ENCODE measurements at regions of chr14 and their contacts with region 1.

Region 1: GRCh38 chr14:74601983-74602382 is 10.1 kb downstream of the LTBP2 start:
- DNase-seq: no peak
- H3K4me3 ChIP-seq: no peak overlapping the region
- H3K27ac ChIP-seq: no peak overlapping the region
- H3K4me1 ChIP-seq: no peaks in the 10 kb centered on the region
- H3K27me3 ChIP-seq: no peaks in the 10 kb centered on the region
- CTCF ChIP-seq: no peak

Region 2: GRCh38 chr14:74469548-74470518 is 132.2 kb before region 1 on chr14:
- CTCF ChIA-PET with region 1: no interaction called
- POLR2A ChIA-PET with region 1: interaction called, 11 read pairs
- intact Hi-C with region 1: no loop called
- DNase-seq: no peak
- H3K4me3 ChIP-seq: no peak overlapping the region
- H3K27ac ChIP-seq: no peak overlapping the region
- H3K4me1 ChIP-seq: no peaks in the 10 kb centered on the region
- H3K27me3 ChIP-seq: no peaks in the 10 kb centered on the region
- CTCF ChIP-seq: no peak

Region 3: DNA sequence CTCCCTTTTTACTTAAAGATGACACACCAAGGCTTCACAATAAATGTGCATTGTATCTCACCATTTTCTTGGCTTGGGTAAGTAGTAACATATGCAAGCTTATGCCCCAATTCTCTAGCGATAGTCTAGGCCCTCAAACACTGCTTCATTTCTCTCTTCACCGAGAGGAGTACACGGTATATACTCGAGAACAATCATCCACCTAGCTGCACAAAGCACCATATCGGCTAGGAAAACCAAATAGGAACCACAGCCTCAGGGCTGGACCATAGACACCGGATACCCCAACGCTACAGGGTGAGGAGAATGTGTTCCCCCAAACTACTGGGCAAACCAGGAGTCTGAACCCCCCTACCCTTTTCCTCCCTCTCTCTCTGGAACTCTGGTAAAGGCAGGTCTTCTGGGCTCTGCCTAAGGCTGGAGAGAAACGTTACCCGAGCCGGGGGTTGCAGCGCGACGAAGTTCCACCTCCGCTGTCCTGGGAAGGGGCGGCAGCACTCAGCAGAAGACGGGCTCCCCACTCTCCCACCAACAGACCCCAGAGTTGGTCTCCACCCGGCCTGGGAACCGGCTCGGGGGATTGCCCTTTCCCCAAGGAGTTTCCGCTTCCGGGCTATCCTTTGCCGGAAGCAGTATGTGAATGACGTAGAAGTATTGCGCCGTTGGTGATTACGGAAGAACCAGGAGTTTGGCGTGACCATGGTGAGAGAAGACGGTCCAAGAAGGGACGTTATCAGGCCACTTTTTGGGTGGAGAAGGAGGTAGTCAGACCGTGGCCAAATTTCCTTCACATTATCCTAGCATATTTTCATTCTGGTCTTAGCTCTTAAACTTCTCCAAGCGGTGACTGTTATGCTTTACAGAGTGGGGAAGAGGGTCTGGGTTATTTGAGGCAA is 110.8 kb after region 1 on chr14 and contains the starts of genes AREL1 and FCF1:
- CTCF ChIA-PET with region 1: no interaction called
- POLR2A ChIA-PET with region 1: no interaction called
- intact Hi-C with region 1: no loop called
- DNase-seq: peak; percentile 86 to 92
- H3K4me3 ChIP-seq: peak within 1 kb of the TSS; percentile 67
- H3K27ac ChIP-seq: peak within 1 kb of the TSS; percentile 27; the same call in 1 of the 2 replicates
- H3K4me1 ChIP-seq: peaks cover 21% of the 10 kb centered on the region
- H3K27me3 ChIP-seq: no peaks in the 10 kb centered on the region
- CTCF ChIP-seq: no peak
- total RNA-seq, gene AREL1: 98.4 and 108 TPM in 2 replicates
- total RNA-seq, gene FCF1: 175 and 191 TPM in 2 replicates